ENCODE measurements at regions of chr12 and their contacts with region 1.

Region 1: GRCh38 chr12:70985850-70986249 is 65.3 kb upstream of the PTPRR start:
- DNase-seq: no peak
- ATAC-seq: no peak
- H3K4me3 ChIP-seq: no peak overlapping the region
- H3K27ac ChIP-seq: no peak overlapping the region
- H3K4me1 ChIP-seq: no peaks in the 10 kb centered on the region
- H3K27me3 ChIP-seq: no peaks in the 10 kb centered on the region
- CTCF ChIP-seq: no peak
- POLR2A ChIP-seq: no peak

Region 2: GRCh38 chr12:70919597-70920035 is 66.2 kb before region 1 on chr12:
- intact Hi-C with region 1: no loop called
- DNase-seq: no peak
- ATAC-seq: no peak
- H3K4me3 ChIP-seq: no peak overlapping the region
- H3K27ac ChIP-seq: no peak overlapping the region
- H3K4me1 ChIP-seq: no peaks in the 10 kb centered on the region
- H3K27me3 ChIP-seq: peaks cover 0 to 33% (median 4%) of the 10 kb centered on the region in 9 donors
- CTCF ChIP-seq: no peak
- POLR2A ChIP-seq: no peak

Region 3: GRCh38 chr12:70962226-70962794 is 23.5 kb before region 1 on chr12:
- intact Hi-C with region 1: loop called in 1 of 10 experiments (anchors 2 kb)
- DNase-seq: no peak
- ATAC-seq: no peak
- H3K4me3 ChIP-seq: no peak overlapping the region
- H3K27ac ChIP-seq: no peak overlapping the region
- H3K4me1 ChIP-seq: no peaks in the 10 kb centered on the region
- H3K27me3 ChIP-seq: no peaks in the 10 kb centered on the region
- CTCF ChIP-seq: no peak
- POLR2A ChIP-seq: no peak

Measured in heart left ventricle (tissue), 16 donors.